Left cardiac atrium (tissue), 4 donors: ENCODE measurements at regions of chr4 and their contacts with region 1.

Region 1: GRCh38 chr4:108683479-108683878 is 33.1 kb downstream of the OSTC start:
- DNase-seq: no peak
- ATAC-seq: no peak

Region 2: DNA sequence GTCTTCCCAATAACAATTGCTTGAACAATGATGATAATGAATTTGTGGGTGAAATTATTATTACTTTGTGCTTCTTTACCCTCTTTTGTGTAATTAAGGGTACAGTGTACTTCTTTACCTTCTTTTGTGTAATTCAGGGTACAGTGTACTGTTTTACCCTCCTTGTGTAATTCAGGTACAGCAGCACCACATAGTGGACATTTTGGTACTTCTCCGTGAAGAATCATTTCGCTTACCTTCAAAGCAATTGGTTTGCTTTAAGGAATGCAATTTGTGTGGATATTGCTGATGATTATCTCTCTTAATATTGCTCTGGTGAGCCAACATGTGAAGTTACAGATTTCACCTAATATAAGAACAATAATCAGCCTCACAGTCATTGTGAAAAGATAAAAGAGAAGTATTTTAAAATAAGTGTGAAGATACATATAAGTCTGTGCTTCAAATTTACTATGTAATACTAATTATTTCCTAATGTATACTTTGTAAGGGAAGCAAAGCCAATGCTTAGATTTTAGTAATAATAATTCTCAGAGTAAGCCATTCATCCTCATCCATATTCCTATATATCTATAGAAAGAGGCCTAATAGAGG is 723.0 kb after region 1 on chr4:
- intact Hi-C with region 1: loop called in 1 of 2 experiments (anchors 10 kb)
- DNase-seq: no peak
- ATAC-seq: peak; percentile 71 to 72